Common myeloid progenitor, CD34-positive (primary cell): ENCODE measurements at regions of chr17 and their contacts with region 1.

Region 1: DNA sequence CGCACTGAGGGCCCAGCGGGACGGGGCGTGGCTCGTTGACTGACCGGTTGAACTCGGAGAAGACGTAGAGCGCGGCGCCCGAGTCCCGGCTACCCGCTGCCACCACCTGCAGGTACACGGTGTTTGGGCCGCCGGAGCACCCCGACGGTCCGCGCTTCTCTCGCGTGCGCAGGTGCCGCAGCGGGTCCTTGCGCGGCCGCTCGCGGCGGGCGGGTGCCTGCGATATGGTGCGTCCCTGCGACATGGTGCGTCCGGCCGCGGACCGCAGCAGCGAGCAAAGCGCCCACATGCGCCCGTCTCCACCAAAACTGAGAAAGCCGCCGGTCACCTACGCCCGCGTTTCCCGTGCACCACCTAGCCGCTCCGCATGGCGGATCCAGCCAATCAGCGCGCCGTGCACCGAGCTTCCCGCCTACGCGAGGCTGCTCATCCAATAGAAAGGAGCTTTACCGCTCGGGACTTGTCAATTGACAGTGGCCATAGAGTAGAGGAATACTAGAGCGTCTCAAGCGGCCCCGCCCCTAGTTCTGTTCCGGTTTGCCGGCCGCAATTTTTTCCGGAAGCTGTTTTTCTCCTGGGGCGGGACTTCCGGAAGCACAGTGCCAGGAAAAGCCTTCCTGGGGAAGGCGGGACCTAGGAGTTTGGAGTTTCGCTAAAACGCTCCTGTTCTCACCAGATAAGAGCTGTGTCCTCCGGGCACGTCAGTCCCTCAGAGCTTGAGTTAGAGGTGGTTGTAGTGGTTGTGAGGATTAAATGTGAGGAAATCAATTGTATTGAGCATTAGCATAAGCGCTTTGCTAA is at the start of gene ELAC2:
- DNase-seq: peak; percentile 97 to 98 (median 97)
- H3K4me3 ChIP-seq: peak within 1 kb of the TSS; percentile 81 to 97 (median 91)
- H3K27ac ChIP-seq: peak within 1 kb of the TSS; percentile 73 to 88
- H3K4me1 ChIP-seq: peaks cover 3 to 17% (median 11%) of the 10 kb centered on the region in 4 experiments
- H3K27me3 ChIP-seq: no peaks in the 10 kb centered on the region

Region 2: DNA sequence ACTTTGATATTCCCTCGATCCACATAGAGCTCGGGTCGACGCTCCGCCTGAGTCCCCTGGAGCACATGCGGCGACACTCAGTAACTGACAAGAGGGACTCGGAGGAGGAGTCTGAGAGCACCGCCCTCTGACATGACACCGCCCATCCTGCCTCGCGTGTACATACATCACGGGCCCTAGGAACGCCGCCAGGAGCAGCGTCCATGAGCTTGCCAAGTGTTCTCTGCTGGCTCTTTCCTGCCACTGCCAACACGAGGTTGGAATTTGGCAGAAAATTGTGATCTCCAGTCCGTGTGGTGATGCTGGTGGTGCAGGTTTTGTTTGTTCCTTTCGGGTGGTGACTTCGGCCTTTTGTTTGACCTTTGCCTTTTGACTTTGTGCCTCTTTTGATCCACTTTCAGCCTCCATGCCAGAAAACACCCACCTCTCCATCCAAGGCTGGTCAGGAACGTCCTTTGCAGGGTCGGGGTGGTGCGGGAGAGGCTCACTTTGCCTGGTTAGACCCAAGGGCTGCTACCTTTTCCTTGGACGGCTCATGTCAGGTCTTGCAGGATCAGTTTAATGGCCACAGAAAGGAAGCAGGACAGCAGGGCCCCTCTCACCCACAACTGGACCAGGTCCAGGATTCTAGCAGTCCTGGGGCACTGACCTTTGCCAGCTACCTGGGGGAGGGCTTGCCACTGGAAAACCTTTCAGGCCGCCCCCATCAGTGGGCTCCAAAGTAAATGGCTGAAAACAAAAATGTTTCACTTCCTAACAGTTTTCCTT is 27.6 kb before region 1 on chr17:
- CTCF ChIA-PET with region 1: no interaction called
- POLR2A ChIA-PET with region 1: no interaction called
- DNase-seq: no peak
- H3K4me3 ChIP-seq: no peak overlapping the region
- H3K27ac ChIP-seq: no peak overlapping the region
- H3K4me1 ChIP-seq: no peaks in the 10 kb centered on the region
- H3K27me3 ChIP-seq: no peaks in the 10 kb centered on the region

Region 3: DNA sequence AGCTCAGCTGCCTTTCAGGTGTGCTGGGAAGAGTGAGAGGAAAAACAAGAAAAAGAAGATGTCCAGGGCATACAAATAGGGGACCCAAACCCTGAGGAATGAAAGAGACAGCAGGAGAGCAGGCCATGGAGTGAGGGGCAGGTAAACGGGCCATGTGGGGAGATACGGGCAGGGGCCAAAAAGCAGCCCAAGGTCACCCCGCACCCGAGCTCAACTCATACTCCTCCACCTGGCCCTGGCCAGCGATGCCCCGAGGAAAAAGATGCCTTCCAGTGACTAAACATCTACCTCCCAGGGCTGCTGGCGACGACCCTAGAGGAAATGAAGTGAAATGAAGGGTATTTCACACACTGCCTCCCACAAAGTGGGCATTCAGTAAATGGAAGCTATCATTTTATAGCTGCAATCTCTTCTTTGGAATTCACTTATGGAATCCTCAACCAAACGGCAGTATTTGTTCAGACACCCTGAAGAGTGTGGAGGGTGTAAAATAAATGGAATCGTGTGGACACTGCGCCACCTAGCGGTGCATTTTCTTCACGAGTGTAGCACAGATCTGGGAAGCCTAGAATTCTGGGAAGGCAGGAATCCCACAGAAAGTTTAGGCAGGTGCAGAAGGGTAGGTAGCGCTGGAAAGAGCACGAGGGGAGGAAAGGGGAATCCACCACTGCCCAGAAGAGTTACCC is 14.9 kb before region 1 on chr17:
- CTCF ChIA-PET with region 1: interaction called, 23 read pairs
- POLR2A ChIA-PET with region 1: no interaction called
- DNase-seq: peak; percentile 25 to 48 (median 35)
- H3K4me3 ChIP-seq: no peak overlapping the region
- H3K27ac ChIP-seq: no peak overlapping the region
- H3K4me1 ChIP-seq: no peaks in the 10 kb centered on the region
- H3K27me3 ChIP-seq: no peaks in the 10 kb centered on the region

Region 4: GRCh38 chr17:13031718-13032350 is 14.0 kb after region 1 on chr17:
- CTCF ChIA-PET with region 1: interaction called, 57 read pairs
- POLR2A ChIA-PET with region 1: no interaction called
- DNase-seq: peak; percentile 58 to 77 (median 75)
- H3K4me3 ChIP-seq: peak overlapping the region in 2 of 7 experiments; percentile 25 to 54
- H3K27ac ChIP-seq: no peak overlapping the region
- H3K4me1 ChIP-seq: peaks cover 0 to 7% (median 3%) of the 10 kb centered on the region in 4 experiments
- H3K27me3 ChIP-seq: no peaks in the 10 kb centered on the region